Cardiac septum (tissue), 1 donor: ENCODE measurements at regions of chr16 and their contacts with region 1.

Region 1: DNA sequence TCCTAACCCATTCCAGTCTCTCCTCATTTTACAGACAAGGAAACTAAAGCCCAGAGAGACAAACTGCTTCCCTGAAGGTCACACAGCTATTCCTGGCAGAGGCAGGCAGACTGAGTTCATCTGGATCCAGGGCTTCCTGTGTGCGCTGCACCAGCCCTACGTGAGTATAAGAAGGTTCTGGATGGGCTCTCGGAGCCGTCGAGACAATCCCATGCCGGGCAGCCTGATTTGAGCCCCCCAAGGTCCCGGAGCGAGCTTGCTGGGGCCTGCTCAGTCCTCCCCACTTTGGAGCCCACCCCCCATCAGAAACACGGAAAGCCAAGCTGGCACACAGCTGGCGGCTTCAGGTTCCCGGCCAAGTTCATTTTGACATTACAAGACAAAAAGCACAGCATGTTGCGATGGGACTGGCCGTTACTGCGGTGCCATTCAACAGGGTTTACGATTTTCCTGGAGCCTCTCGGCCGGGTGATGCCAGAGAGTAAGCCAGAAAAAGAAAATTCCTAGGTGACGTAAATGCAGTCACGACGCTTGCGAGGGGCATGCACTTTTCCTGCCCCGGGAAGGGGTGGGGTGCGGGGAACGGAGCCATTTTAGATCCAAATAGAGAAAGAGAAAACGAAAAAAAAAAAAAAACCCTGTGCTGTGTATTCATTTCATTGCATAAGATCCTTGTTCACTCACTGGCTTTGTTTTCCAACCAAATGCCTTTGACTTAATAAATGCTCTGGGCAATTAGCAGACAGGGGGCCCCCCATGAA is 167.1 kb upstream of the FOXF1 start:
- DNase-seq: no peak

Region 2: DNA sequence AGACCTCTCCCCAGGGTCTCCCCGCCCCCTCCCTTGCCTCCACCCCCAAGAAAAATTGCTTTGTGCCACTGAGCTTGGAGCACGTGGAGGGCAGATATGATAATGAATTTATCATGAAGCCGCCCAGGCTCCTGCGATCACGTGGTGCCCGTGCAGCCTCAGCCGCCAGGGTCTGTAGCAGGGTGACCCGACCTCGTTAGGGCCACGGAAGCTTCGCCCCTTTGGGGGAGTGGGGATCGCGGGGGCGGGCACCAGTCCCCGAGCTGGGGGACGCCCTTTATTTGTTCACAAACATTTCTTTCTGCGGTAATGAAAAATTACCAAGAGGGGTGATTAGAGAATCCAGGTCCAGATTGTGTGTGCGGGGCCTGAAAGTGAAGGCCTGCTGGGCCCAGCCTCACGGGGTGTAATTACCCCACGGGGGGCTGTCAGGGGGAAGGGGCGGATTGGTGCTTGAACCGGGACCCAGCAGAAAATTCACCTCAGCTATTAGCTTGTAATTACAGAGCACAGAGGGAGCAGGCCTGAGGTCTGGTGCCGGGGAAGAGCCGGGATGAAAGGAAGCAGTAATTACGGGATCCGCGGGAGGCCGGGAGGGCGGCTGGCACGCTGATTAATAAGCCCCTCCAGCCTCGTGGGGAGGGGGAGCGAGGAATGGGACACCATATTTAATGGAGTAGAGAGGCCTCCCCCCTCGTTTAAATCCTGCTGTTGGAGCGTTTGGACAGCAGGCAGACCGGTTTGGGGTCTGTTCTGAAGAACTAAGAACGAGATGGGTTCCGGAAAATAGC is 716.8 kb before region 1 on chr16:
- intact Hi-C with region 1: no loop called
- DNase-seq: no peak

Region 3: DNA sequence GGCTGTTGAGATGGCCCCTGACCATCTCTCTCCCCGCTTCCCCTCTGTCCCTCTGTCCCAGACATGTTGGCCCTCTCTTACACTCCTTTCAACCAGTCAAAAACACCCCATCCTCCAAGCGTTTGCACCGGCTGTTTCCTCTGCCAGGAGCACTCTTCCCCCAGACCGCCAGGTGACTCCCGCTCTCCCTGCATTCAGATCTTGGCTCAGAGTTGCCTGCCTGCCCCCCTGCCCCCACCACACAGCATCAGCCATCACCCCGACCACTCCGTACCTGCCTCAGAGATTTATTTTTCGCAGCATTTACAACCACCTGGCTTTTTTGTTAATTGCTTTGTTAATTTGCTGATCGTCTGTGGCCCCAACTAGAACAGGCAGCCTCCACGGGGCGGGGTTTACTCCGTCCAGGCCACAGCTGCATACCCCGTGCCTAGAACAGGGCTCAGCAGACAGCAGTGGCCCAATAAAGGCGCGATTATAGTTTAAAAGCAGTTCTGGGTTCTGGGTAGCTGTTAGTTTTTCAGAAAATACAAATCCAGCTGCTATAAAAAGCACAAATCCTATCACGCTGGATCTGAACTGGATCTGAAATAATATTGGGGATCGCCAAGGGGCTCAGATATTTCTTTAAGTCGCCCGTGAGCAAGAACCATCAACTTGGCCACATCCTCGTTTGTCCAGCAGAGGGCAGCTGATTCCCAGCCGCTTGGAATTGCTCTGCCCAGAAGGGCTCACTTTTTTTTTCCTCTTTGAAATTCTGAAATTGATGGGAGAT is 270.7 kb before region 1 on chr16:
- intact Hi-C with region 1: loop called (anchors 10 kb)
- DNase-seq: no peak

Region 4: DNA sequence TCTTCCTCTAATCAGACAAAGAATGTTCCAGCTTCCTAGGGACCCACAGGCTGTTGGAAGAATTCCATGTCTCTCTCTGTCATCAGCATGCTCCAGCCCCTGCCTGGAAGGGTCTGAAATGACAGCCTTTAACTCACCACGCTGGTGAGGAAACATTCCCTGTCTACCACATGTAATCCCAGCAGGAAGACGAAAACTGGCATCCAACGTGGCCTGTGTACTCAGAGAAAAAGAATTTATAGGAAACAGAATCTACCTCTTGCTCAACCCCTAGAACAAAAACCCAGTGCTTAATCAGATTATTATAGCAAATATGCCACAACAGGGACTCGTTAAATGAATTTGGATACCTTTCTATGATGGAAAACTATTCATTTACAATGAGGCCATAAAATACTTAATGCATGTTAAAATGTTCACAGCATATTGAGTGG is 19.9 kb after region 1 on chr16:
- intact Hi-C with region 1: no loop called
- DNase-seq: no peak